Activated CD4-positive, alpha-beta memory T cell treated with anti-CD3 and anti-CD28 coated beads for 36 hours (primary cell): ENCODE measurements at regions of chr4 and their contacts with region 1.

Region 1: DNA sequence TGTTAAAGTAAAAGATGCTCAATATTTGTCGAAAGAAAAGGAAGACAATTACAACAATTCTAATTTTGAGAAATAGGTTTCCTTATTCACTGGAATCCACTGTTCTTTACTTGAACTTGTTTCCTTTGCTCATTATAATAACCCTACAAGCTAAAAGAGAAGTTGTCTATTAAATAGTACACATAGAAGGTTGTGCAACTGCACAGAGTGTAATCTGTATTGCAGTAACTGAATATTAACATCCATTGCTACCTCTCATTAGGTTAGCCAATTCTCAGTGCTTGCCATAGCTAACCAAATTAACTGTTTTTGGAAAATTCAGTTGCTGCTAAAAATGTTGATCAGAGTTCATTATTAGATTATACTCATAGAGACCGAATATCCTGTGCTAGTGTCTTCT is 120.0 kb downstream of the PDLIM5 start:
- DNase-seq: no peak
- H3K4me3 Mint-ChIP-seq: no peak overlapping the region
- H3K27ac Mint-ChIP-seq: no peak overlapping the region
- H3K4me1 Mint-ChIP-seq: peaks cover 4% of the 10 kb centered on the region
- H3K27me3 Mint-ChIP-seq: no peaks in the 10 kb centered on the region

Region 2: GRCh38 chr4:94497690-94498089 is 74.0 kb before region 1 on chr4:
- CTCF ChIA-PET with region 1: no interaction called
- POLR2A ChIA-PET with region 1: no interaction called
- intact Hi-C with region 1: loop called (anchors 2 kb)
- DNase-seq: no peak
- H3K4me3 Mint-ChIP-seq: no peak overlapping the region
- H3K27ac Mint-ChIP-seq: no peak overlapping the region
- H3K4me1 Mint-ChIP-seq: peaks cover 2% of the 10 kb centered on the region
- H3K27me3 Mint-ChIP-seq: no peaks in the 10 kb centered on the region